ENCODE measurements at regions of chr20 and their contacts with region 1.

Region 1: GRCh38 chr20:51121901-51122441 is 99.1 kb upstream of the KCNG1 start:
- DNase-seq: peak; percentile 47
- H3K4me3 Mint-ChIP-seq: peak overlapping the region; percentile 50
- H3K27ac Mint-ChIP-seq: peak overlapping the region; percentile 86
- H3K4me1 Mint-ChIP-seq: peaks cover 28% of the 10 kb centered on the region
- H3K27me3 Mint-ChIP-seq: no peaks in the 10 kb centered on the region
- CTCF ChIP-seq: no peak

Region 2: GRCh38 chr20:50958615-50959542 is 163.1 kb before region 1 on chr20 and contains the start of gene MOCS3:
- CTCF ChIA-PET with region 1: no interaction called
- POLR2A ChIA-PET with region 1: no interaction called
- intact Hi-C with region 1: no loop called
- DNase-seq: peak; percentile 92
- H3K4me3 Mint-ChIP-seq: peak within 1 kb of the TSS; percentile 91
- H3K27ac Mint-ChIP-seq: peak within 1 kb of the TSS; percentile 100
- H3K4me1 Mint-ChIP-seq: peaks cover 15% of the 10 kb centered on the region
- H3K27me3 Mint-ChIP-seq: no peaks in the 10 kb centered on the region
- CTCF ChIP-seq: no peak
- total RNA-seq, gene MOCS3: 5.8 and 6.0 TPM in 2 replicates

Region 3: DNA sequence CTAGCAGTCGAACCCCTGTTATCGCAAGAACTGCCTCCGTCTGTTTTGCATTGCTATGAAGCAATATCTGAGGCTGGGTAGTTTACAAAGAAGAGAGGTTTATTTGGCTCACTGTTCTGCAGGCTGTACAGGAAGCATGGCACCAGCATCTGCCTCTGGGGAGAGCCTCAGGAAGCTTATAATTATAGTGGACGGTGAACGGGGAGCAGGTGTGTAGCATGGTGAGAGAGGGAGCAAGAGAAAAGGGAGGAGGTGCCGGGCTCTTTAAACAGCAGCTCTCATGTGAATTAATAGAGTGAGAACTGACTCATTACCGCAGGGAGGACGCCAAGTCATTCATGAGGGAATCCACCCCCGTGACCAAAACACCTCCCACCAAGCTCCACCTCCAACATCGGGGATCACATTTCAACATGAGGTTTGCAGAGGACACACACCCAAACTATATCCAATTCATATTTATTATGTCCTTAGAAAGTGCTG is 73.5 kb after region 1 on chr20:
- CTCF ChIA-PET with region 1: no interaction called
- POLR2A ChIA-PET with region 1: no interaction called
- intact Hi-C with region 1: loop called (anchors 2 kb)
- DNase-seq: peak; percentile 91
- H3K4me3 Mint-ChIP-seq: no peak overlapping the region
- H3K27ac Mint-ChIP-seq: no peak overlapping the region
- H3K4me1 Mint-ChIP-seq: peaks cover 9% of the 10 kb centered on the region
- H3K27me3 Mint-ChIP-seq: no peaks in the 10 kb centered on the region
- CTCF ChIP-seq: no peak

Measured in MCF 10A (cell line).